Lower leg skin (tissue), 4 donors: ENCODE measurements at regions of chr7 and their contacts with region 1.

Region 1: GRCh38 chr7:130896898-130897514 is 163.0 kb upstream of the KLF14 start:
- DNase-seq: peak in 1 of 2 donors; percentile 93
- H3K4me3 ChIP-seq: no peak overlapping the region
- CTCF ChIP-seq: no peak
- POLR2A ChIP-seq: no peak

Region 2: GRCh38 chr7:130668257-130669084 is 228.5 kb before region 1 on chr7 and contains the start of gene COPG2:
- intact Hi-C with region 1: no loop called
- DNase-seq: peak; percentile 73 to 95
- H3K4me3 ChIP-seq: peak within 1 kb of the TSS; percentile 83
- CTCF ChIP-seq: no peak
- POLR2A ChIP-seq: no peak
- total RNA-seq, gene COPG2: 19.9 to 25.9 (median 23.8) TPM

Region 3: GRCh38 chr7:131040467-131040932 is 143.5 kb after region 1 on chr7:
- intact Hi-C with region 1: loop called (anchors 5 kb)
- DNase-seq: peak in 1 of 2 donors; percentile 72
- H3K4me3 ChIP-seq: no peak overlapping the region
- CTCF ChIP-seq: peak in 1 of 3 donors; percentile 89
- POLR2A ChIP-seq: no peak

Region 4: GRCh38 chr7:131412031-131412430 is 515.0 kb after region 1 on chr7:
- intact Hi-C with region 1: loop called (anchors 5 kb)
- DNase-seq: no peak
- H3K4me3 ChIP-seq: no peak overlapping the region
- CTCF ChIP-seq: no peak
- POLR2A ChIP-seq: no peak